ENCODE measurements at regions of chr5 and their contacts with region 1.

Region 1: GRCh38 chr5:38382898-38383297 is 124.5 kb downstream of the EGFLAM start:
- DNase-seq: peak in 4 of 5 donors; percentile 18 to 30 (median 28)
- H3K4me3 ChIP-seq: no peak overlapping the region
- H3K4me3 Mint-ChIP-seq: no peak overlapping the region
- H3K27ac ChIP-seq: no peak overlapping the region
- H3K27ac Mint-ChIP-seq: no peak overlapping the region
- H3K4me1 ChIP-seq: no peaks in the 10 kb centered on the region
- H3K4me1 Mint-ChIP-seq: peaks cover 0 to 2% (median 0%) of the 10 kb centered on the region in 4 donors
- H3K27me3 ChIP-seq: no peaks in the 10 kb centered on the region
- H3K27me3 Mint-ChIP-seq: peaks cover 14 to 17% of the 10 kb centered on the region in 2 donors

Region 2: DNA sequence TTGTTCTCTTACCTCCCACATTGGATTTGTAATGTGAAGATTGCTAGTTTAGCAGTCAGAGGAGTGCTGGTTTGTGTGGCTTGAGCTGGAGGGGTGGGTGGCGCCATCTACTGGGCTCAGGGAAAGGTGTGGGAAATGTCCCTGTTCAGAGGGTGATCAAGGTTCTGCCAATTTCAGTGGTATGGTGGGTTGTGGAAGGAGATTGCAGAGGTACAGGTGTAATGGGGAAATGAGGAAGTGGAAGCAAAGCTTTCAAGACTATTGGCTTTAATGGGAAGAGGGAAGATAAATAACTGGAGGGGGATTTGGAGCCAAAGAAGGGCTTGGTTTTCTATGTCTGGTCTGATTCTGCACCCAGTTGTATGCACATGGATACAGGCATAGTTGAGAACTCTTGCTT is 539.3 kb after region 1 on chr5:
- CTCF ChIA-PET with region 1: no interaction called
- POLR2A ChIA-PET with region 1: no interaction called
- intact Hi-C with region 1: loop called (anchors 5 kb)
- DNase-seq: peak in 4 of 5 donors; percentile 19 to 35 (median 25)
- H3K4me3 ChIP-seq: no peak overlapping the region
- H3K4me3 Mint-ChIP-seq: no peak overlapping the region
- H3K27ac ChIP-seq: no peak overlapping the region
- H3K27ac Mint-ChIP-seq: no peak overlapping the region
- H3K4me1 ChIP-seq: no peaks in the 10 kb centered on the region
- H3K4me1 Mint-ChIP-seq: no peaks in the 10 kb centered on the region
- H3K27me3 ChIP-seq: no peaks in the 10 kb centered on the region
- H3K27me3 Mint-ChIP-seq: peaks cover 10 to 22% of the 10 kb centered on the region in 2 donors